PC-9 (cell line): ENCODE measurements at regions of chr17 and their contacts with region 1.

Region 1: GRCh38 chr17:75046582-75047289 is at the starts of genes ATP5PD and KCTD2:
- DNase-seq: peak; percentile 89 to 95
- H3K4me3 ChIP-seq: peak within 1 kb of the TSS; percentile 84
- H3K27ac ChIP-seq: peak within 1 kb of the TSS; percentile 60
- H3K4me1 ChIP-seq: peaks cover 22% of the 10 kb centered on the region
- H3K27me3 ChIP-seq: no peaks in the 10 kb centered on the region
- CTCF ChIP-seq: no peak; the same call in 1 of the 2 replicates
- total RNA-seq, gene ATP5PD: 306 and 336 TPM in 2 replicates
- total RNA-seq, gene KCTD2: 18.4 and 18.6 TPM in 2 replicates

Region 2: DNA sequence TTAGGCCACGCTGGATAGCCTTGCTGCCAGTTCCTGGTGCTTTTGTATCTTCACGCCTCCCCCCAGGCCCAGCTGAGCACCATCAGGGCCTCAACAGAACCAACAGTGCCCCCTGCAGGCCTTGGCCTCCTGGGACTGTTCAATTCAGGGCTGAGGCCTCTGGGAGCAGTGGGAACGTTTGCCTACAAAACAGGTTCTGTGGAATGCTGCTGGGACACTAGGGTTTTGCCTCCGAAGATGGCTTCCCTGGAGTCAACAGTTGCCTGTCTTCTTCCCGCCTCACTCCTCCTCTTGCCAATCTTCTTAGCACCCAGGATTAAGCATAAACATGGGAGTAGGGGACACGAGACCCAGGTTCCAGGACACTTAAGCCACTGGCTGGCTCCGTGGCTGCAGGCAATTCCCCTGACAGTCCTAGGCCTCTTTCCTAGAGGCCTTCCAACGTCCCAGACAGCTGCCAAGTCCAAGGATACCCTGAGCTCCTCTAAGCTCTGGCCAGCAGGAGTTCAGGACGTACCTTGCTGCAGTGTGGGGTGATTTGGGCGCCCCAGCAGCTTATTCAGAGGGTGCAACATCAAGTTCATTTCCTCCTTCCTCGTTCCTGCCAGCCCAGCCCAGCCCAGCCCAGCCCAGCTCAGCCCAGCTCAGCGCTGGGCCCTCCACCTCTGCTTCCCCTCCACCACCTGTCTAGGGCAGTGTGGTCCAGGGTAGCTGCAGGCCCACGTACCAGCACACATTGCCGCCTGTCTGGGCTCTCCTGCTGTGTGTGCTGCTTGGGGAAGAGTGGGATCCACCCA is 1089.9 kb before region 1 on chr17:
- CTCF ChIA-PET with region 1: no interaction called
- POLR2A ChIA-PET with region 1: no interaction called
- intact Hi-C with region 1: no loop called
- DNase-seq: peak in 1 of 2 experiments; percentile 6
- H3K4me3 ChIP-seq: no peak overlapping the region
- H3K27ac ChIP-seq: no peak overlapping the region
- H3K4me1 ChIP-seq: no peaks in the 10 kb centered on the region
- H3K27me3 ChIP-seq: peaks cover 35% of the 10 kb centered on the region
- CTCF ChIP-seq: peak; percentile 43; the same call in 1 of the 2 replicates

Region 3: DNA sequence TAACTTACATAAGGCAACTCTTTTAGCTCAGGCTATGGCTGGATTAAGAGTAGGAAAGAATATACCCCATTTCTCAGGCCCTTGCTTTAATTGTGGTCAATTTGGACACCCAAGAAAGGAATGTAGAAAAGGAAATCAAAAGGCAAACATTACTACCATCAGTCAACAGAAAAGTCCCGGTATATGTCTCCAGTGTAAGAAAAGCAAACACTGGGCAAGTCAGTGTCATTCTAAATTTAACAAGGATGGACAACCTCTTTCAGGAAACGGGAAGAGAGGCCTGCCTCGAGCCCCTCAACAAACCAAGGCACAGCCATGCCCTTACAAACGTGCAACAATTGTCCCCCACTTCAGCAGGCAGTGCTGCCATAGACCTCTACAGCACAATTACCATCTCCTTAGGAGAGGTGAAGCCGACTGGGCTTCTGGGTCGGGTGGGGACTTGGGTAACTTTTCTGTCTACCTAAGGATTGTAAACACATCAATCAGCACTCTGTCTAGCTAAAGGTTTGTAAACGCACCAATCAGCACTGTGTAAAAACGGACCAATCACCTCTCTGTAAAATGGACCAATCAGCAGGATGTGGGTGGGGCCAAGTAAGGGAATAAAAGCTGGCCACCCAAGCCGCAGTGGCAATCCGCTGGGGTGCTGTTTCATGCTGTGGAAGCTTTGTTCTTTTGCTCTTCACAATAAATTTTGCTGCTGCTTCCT is 21.9 kb before region 1 on chr17:
- CTCF ChIA-PET with region 1: no interaction called
- POLR2A ChIA-PET with region 1: no interaction called
- intact Hi-C with region 1: no loop called
- DNase-seq: no peak
- H3K4me3 ChIP-seq: no peak overlapping the region
- H3K27ac ChIP-seq: no peak overlapping the region
- H3K4me1 ChIP-seq: peaks cover 31% of the 10 kb centered on the region
- H3K27me3 ChIP-seq: no peaks in the 10 kb centered on the region
- CTCF ChIP-seq: no peak

Region 4: DNA sequence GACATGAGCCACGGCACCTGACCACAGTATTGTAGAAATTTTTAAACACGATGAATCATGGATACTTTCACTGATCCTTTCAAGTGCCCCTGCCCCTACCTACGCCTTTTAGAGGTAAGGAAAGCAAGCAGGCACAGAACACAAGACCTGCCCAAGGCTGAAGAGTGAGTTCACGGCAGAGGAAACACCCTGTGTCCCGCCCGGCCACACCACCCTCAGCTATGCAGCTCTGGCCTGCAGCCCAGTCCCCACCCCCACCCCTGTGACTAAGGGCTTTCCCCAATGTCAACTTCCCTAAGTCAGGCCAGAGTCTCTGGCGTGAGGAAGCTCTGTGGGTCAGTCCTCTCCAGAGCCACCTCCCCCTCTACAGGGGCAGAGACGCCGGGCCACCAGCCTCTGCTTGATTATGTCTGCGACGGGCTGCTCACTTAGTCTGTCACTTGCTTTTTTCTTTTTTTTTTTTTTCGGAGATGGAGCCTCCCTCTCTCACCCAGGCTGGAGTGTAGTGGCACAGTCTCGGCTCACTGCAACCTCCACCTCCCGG is 49.4 kb after region 1 on chr17:
- CTCF ChIA-PET with region 1: no interaction called
- POLR2A ChIA-PET with region 1: no interaction called
- intact Hi-C with region 1: loop called (anchors 2 kb)
- DNase-seq: peak; percentile 89 to 99
- H3K4me3 ChIP-seq: no peak overlapping the region; the same call in 1 of the 2 replicates
- H3K27ac ChIP-seq: peak overlapping the region; percentile 89
- H3K4me1 ChIP-seq: peaks cover 58% of the 10 kb centered on the region
- H3K27me3 ChIP-seq: no peaks in the 10 kb centered on the region
- CTCF ChIP-seq: no peak

Region 5: DNA sequence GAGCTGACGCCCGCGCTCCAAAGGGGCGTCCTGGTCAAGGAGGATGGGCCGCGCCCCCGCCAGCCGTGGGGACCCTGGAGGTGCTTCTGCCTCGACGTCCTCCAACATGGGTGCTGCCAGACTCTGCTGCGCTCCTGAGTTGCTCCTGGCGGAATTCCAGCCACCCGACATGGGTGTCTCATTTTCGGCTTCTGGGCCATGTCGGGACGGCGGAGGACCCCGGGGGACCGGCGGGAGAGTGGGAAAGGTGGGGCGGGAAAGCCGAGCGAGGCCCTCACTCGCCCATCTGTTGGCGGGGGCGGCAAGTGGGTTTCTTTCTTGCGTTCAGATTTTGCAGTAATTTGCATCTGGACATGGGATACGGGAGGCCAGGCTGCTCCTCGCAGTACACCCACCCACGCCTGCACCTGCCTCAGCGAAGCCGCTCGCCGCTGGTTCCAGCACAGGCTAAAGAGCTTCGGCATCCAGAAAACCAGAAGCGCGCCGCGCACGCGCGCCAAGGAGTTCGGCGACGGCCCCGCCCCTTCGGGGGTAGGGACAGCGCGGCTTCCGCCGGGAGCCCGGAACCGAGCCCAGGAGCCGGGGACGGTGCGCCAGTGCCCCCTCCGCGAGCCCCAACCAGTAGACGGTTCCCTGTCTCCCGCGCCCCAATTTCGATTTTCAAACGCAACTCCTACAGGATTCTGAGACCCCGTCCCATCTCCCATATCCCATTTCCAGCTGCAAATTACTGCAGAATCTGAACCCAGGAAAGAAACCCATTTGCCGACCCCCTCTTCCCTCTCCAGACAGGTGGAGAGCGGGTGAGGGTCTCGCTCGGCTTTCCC is 62.9 kb after region 1 on chr17 and contains the start of gene ARMC7:
- CTCF ChIA-PET with region 1: no interaction called
- POLR2A ChIA-PET with region 1: no interaction called
- intact Hi-C with region 1: no loop called
- DNase-seq: peak; percentile 69 to 92
- H3K4me3 ChIP-seq: peak within 1 kb of the TSS; percentile 59
- H3K27ac ChIP-seq: peak within 1 kb of the TSS; percentile 44; the same call in 1 of the 2 replicates
- H3K4me1 ChIP-seq: peaks cover 12% of the 10 kb centered on the region; the same call in 1 of the 2 replicates
- H3K27me3 ChIP-seq: no peaks in the 10 kb centered on the region
- CTCF ChIP-seq: no peak
- total RNA-seq, gene ARMC7: 19.2 and 20.5 TPM in 2 replicates